ENCODE measurements at regions of chr6 and their contacts with region 1.

Region 1: GRCh38 chr6:10722820-10723566 is at the start of gene TMEM14C:
- DNase-seq: peak; percentile 44 to 91 (median 78)
- ATAC-seq: peak; percentile 57
- H3K4me3 ChIP-seq: peak within 1 kb of the TSS; percentile 76
- H3K4me3 Mint-ChIP-seq: peak within 1 kb of the TSS; percentile 95
- H3K27ac ChIP-seq: peak within 1 kb of the TSS; percentile 37 to 73
- H3K27ac Mint-ChIP-seq: peak within 1 kb of the TSS; percentile 92
- H3K4me1 ChIP-seq: peaks cover 40% of the 10 kb centered on the region
- H3K4me1 Mint-ChIP-seq: peaks cover 69% of the 10 kb centered on the region
- H3K27me3 ChIP-seq: no peaks in the 10 kb centered on the region
- H3K27me3 Mint-ChIP-seq: no peaks in the 10 kb centered on the region
- CTCF ChIP-seq: no peak
- total RNA-seq, gene TMEM14C: 14.4 to 14.6 TPM

Region 2: DNA sequence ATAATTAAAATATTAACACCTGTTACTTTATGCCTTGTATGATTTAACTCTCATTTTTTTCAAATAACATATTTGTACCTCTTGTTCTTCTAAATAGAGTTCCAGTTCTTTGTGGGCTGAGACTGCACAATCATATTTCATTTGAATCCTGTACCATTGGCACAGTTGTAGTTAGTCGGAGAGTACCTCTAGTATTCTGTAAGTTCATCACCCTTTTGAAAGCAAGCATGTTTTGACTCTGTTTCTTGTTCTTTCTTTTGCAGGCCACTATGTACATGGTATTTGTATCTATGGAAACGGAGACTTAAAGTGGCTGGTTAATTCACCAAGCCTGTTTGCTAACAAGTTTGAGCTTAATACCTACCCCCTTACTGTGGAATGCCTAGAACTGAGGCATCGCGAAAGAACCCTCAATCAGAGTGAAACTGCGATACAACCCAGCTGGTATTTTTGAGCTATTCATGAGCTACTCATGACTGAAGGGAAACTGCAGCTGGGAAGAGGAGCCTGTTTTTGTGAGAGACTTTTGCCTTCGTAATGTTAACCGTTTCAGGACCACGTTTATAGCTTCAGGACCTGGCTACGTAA is 96.7 kb before region 1 on chr6:
- CTCF ChIA-PET with region 1: no interaction called
- POLR2A ChIA-PET with region 1: no interaction called
- intact Hi-C with region 1: no loop called
- DNase-seq: no peak
- ATAC-seq: no peak
- H3K4me3 ChIP-seq: no peak overlapping the region
- H3K4me3 Mint-ChIP-seq: no peak overlapping the region
- H3K27ac ChIP-seq: no peak overlapping the region
- H3K27ac Mint-ChIP-seq: no peak overlapping the region
- H3K4me1 ChIP-seq: no peaks in the 10 kb centered on the region
- H3K4me1 Mint-ChIP-seq: no peaks in the 10 kb centered on the region
- H3K27me3 ChIP-seq: no peaks in the 10 kb centered on the region
- H3K27me3 Mint-ChIP-seq: no peaks in the 10 kb centered on the region
- CTCF ChIP-seq: no peak

Region 3: DNA sequence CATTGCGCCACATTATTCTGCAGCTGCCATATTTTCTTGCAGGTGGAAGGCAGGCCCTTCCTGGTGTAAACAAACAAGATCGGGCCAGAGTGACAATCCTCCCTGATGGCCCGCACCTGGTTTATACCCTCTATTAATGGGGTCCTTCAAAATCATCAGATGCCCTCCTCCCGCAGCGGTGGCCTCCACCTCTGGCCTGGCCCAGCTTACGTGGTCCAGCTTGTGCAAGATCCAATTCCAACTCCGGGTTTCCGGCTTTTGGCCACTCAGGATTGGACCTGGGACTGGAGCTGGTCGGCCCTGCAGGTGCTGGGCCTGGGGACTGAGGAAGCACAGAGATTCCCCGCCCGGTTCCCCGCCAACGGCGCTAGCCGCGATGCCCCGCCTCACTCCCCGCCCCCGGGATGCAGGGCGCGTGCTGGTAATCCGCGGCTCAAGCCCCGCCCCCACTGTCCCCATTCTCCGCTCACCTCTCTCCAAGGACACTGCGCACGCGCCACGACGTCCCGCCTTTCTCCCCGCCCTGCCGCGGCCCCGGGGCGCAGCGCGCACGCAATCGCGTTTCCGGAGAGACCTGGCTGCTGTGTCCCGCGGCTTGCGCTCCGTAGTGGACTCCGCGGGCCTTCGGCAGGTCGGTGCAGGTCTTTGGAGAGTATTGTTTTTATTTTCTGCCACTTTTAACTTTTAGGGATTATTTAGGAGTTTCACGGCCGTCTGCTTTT is 24.4 kb after region 1 on chr6 and contains the start of gene TMEM14B:
- CTCF ChIA-PET with region 1: interaction called, 3 read pairs
- POLR2A ChIA-PET with region 1: interaction called, 64 read pairs
- intact Hi-C with region 1: loop called (anchors 1 kb)
- DNase-seq: peak; percentile 99 to 100 (median 100)
- ATAC-seq: peak; percentile 97
- H3K4me3 ChIP-seq: peak within 1 kb of the TSS; percentile 95
- H3K4me3 Mint-ChIP-seq: peak within 1 kb of the TSS; percentile 86
- H3K27ac ChIP-seq: peak within 1 kb of the TSS; percentile 60 to 75
- H3K27ac Mint-ChIP-seq: peak within 1 kb of the TSS; percentile 97
- H3K4me1 ChIP-seq: peaks cover 35% of the 10 kb centered on the region
- H3K4me1 Mint-ChIP-seq: peaks cover 69% of the 10 kb centered on the region
- H3K27me3 ChIP-seq: no peaks in the 10 kb centered on the region
- H3K27me3 Mint-ChIP-seq: no peaks in the 10 kb centered on the region
- CTCF ChIP-seq: no peak
- total RNA-seq, gene TMEM14B: 41.8 to 44.1 TPM

Region 4: GRCh38 chr6:10939840-10940239 is 216.8 kb after region 1 on chr6:
- CTCF ChIA-PET with region 1: no interaction called
- POLR2A ChIA-PET with region 1: no interaction called
- intact Hi-C with region 1: no loop called
- DNase-seq: no peak
- ATAC-seq: no peak
- H3K4me3 ChIP-seq: no peak overlapping the region
- H3K4me3 Mint-ChIP-seq: no peak overlapping the region
- H3K27ac ChIP-seq: no peak overlapping the region
- H3K27ac Mint-ChIP-seq: no peak overlapping the region
- H3K4me1 ChIP-seq: no peaks in the 10 kb centered on the region
- H3K4me1 Mint-ChIP-seq: no peaks in the 10 kb centered on the region
- H3K27me3 ChIP-seq: no peaks in the 10 kb centered on the region
- H3K27me3 Mint-ChIP-seq: peaks cover 7% of the 10 kb centered on the region
- CTCF ChIP-seq: no peak